Activated T-helper 1 cell treated with anti-CD3 and anti-CD28 coated beads, Interleukin-12 subunit alpha, Interleukin-12 subunit beta, Interleukin-2, Interleukin-4 antibody, amounts not matched to agents 30 ng/mL and 10 ng/mL and 1 ng/mL, durations not matched to agents 14 hours and 24 hours and 36 hours (primary cell): ENCODE measurements at regions of chr7 and their contacts with region 1.

Region 1: GRCh38 chr7:21253740-21254687 is 173.9 kb upstream of the SP4 start:
- DNase-seq: peak; percentile 37
- H3K4me3 Mint-ChIP-seq: peak overlapping the region; percentile 74
- H3K27ac Mint-ChIP-seq: peak overlapping the region; percentile 32
- H3K4me1 Mint-ChIP-seq: peaks cover 21% of the 10 kb centered on the region
- H3K27me3 Mint-ChIP-seq: peaks cover 70% of the 10 kb centered on the region

Region 2: DNA sequence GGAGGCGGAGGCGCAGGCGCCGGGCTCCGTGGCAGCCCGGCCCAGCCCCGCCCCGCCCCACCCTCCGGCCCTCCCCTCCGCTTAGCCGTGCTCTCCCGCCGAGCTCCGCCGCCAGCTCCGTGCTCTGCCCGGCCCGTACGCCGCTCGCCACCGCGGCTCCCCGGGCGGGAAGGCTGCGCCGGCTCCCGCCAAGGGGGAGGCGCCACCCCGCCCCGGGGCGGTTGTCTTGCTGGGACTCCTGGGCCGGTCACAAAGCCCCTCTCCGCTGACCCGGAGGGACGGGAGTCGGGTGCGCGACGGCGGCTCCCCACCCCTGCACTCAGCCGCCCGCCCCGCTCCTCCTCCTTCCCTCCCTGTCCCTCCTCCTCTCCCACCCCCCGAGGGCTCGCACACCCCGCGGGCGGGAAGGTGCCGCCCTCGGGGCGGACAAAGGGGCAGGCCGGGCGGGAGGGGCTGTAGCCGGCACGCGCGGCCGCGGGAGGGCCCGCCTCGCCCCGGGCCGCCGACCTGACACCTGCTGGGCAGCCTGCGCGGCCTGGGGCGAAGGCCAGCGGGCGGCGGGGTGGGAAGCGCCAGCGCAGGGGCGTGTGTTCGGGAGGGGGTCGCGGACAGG is 455.8 kb before region 1 on chr7:
- intact Hi-C with region 1: loop called (anchors 5 kb)
- DNase-seq: no peak
- H3K4me3 Mint-ChIP-seq: no peak overlapping the region
- H3K27ac Mint-ChIP-seq: no peak overlapping the region
- H3K4me1 Mint-ChIP-seq: peaks cover 11% of the 10 kb centered on the region
- H3K27me3 Mint-ChIP-seq: peaks cover 57% of the 10 kb centered on the region

Region 3: DNA sequence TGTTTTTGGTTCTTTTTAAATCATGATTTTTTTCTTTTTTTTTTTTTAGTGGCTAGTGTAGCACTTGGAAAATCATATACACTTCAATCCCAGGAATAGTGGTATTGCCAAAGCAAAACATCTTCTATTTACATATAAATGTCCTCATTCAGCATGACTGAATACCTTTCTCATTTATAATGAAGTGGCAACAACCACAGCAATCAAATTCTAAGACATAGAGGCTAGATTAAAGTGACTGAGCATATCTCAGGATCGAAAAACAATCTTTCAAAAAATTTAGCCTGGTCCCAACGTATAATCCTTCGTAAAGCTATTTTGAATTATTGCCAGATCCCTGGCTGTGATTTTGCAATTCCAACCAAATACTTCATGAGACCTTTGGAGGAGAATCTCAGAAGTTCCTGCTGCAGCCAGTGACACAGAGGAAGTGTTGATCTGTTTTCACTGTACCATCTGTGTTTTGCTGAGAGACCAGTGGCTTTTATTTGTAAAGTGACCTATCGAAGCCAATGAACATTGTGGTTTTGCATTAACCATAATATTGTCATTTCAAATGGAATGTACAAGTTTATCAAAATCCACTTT is 437.5 kb before region 1 on chr7:
- intact Hi-C with region 1: no loop called
- DNase-seq: no peak
- H3K4me3 Mint-ChIP-seq: no peak overlapping the region
- H3K27ac Mint-ChIP-seq: no peak overlapping the region
- H3K4me1 Mint-ChIP-seq: no peaks in the 10 kb centered on the region
- H3K27me3 Mint-ChIP-seq: no peaks in the 10 kb centered on the region

Region 4: GRCh38 chr7:21507626-21508343 is 253.8 kb after region 1 on chr7:
- intact Hi-C with region 1: loop called (anchors 1 kb)
- DNase-seq: no peak
- H3K4me3 Mint-ChIP-seq: no peak overlapping the region
- H3K27ac Mint-ChIP-seq: no peak overlapping the region
- H3K4me1 Mint-ChIP-seq: peaks cover 9% of the 10 kb centered on the region
- H3K27me3 Mint-ChIP-seq: no peaks in the 10 kb centered on the region

Region 5: DNA sequence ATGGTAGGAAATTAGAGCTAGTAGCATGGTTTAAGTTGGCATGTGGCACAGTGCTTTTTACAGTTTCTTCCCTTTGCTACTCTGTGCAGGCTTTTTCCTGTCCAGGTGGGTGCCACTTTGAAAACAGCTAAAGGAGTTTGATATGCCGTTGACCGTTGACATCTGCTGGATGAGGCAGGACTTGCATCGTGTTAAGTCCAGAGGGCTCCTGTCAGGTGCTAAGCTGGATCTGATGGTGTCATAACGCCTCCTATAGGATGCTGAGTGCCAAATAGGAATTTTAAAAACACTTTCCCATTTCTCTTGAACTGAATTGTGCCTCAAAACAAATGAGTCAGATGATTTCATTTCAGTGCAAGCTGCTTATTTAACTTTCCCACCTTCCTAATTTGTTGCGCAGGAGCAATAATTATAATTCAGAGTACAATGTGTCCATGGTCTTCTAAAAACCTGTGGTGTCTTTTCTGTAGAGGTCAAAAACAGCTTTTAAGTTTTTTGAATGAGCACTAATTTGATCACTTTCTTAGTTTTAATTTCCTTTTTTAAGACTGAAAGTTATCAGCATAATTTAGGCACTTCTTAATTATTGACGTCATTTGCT is 513.4 kb after region 1 on chr7:
- intact Hi-C with region 1: loop called (anchors 1 kb)
- DNase-seq: peak; percentile 4
- H3K4me3 Mint-ChIP-seq: no peak overlapping the region
- H3K27ac Mint-ChIP-seq: no peak overlapping the region
- H3K4me1 Mint-ChIP-seq: peaks cover 11% of the 10 kb centered on the region
- H3K27me3 Mint-ChIP-seq: peaks cover 7% of the 10 kb centered on the region

Region 6: DNA sequence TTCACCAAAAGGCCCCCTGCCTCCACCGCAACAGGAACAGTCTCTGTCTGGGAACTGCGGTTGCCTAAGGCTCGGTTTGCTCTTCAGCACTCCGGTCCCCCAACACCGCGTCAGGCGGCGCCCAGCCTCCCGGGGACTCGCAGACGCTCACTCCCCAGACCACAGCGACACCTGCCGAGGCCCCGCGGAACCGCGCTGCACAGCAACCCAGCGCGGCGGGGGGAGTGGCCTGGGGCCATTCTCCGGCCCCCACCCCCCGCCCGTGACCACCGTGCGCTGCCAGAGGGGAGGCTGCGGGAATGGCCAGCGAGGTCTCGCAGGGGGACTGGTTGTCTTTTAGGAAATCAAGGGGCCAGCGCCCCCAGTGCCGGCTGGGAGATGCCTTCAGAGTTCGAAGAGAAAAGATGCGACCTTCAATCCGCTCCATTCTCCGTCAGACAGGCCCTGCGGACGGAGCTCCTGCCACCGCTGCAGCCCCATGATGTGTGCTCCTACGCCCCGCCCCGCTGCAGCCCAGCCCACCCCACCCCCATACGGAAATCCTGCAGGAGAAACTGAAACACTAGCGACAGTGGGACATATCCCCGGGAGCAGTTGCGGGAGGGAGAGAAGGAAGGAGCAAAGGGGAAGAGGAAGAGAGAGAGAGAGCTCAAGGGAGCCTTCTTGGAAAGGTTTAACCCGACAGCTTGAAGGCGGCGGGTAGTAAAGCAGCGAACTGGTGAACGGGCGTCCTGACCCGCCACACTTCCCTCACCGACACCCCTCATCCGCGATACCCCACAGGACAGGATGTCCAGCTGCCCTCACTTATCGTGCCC is 829.1 kb after region 1 on chr7:
- intact Hi-C with region 1: loop called (anchors 5 kb)
- DNase-seq: peak; percentile 63
- H3K4me3 Mint-ChIP-seq: peak overlapping the region; percentile 75
- H3K27ac Mint-ChIP-seq: no peak overlapping the region
- H3K4me1 Mint-ChIP-seq: peaks cover 5% of the 10 kb centered on the region
- H3K27me3 Mint-ChIP-seq: peaks cover 30% of the 10 kb centered on the region